ENCODE measurements at regions of chr12 and their contacts with region 1.

Region 1: GRCh38 chr12:116066381-116067230 is 210.9 kb downstream of the MED13L start:
- DNase-seq: peak; percentile 78
- ATAC-seq: peak; percentile 83
- H3K4me3 Mint-ChIP-seq: no peak overlapping the region
- H3K27ac Mint-ChIP-seq: peak overlapping the region; percentile 12
- H3K4me1 Mint-ChIP-seq: peaks cover 36% of the 10 kb centered on the region
- H3K27me3 Mint-ChIP-seq: no peaks in the 10 kb centered on the region

Region 2: DNA sequence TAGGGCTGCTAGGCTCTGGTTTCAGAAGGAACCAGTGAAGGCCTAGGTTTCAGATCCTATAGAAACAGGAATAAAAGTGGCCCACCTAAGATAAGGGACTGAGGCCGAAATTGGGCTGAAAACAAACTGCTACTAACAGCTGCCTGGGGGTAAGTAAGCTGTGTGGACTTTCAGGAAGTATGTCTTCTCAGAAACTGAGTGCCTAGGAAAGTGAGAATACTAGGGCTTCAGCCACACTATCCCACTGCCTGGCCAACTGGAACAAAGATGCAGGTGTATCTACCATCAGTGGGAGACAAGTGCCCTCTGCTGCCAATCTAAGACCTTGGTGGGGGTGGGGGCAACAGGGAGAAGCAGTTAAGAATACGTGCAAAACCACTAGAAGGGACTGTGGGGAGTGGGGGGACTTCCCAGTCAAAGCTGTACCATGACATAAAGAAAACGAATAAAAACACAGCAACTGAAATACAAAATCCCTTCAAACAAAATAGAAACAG is 128.4 kb after region 1 on chr12:
- CTCF ChIA-PET with region 1: no interaction called
- POLR2A ChIA-PET with region 1: no interaction called
- intact Hi-C with region 1: loop called in 1 of 2 experiments (anchors 10 kb)
- DNase-seq: peak; percentile 81
- ATAC-seq: peak; percentile 93
- H3K4me3 Mint-ChIP-seq: peak overlapping the region; percentile 40
- H3K27ac Mint-ChIP-seq: peak overlapping the region; percentile 69
- H3K4me1 Mint-ChIP-seq: peaks cover 66% of the 10 kb centered on the region
- H3K27me3 Mint-ChIP-seq: no peaks in the 10 kb centered on the region

Region 3: GRCh38 chr12:116236148-116236731 is 169.6 kb after region 1 on chr12:
- CTCF ChIA-PET with region 1: interaction called, 11 read pairs
- POLR2A ChIA-PET with region 1: no interaction called
- intact Hi-C with region 1: loop called in 1 of 2 experiments (anchors 1 kb)
- DNase-seq: peak; percentile 66
- ATAC-seq: peak; percentile 60
- H3K4me3 Mint-ChIP-seq: peak overlapping the region; percentile 14
- H3K27ac Mint-ChIP-seq: peak overlapping the region; percentile 63
- H3K4me1 Mint-ChIP-seq: peaks cover 35% of the 10 kb centered on the region
- H3K27me3 Mint-ChIP-seq: no peaks in the 10 kb centered on the region